ENCODE measurements at regions of chr3 and their contacts with region 1.

Region 1: GRCh38 chr3:129249276-129250065 is at the start of gene COPG1:
- DNase-seq: peak; percentile 89 to 91 (median 90)
- ATAC-seq: peak; percentile 92
- H3K4me3 ChIP-seq: peak within 1 kb of the TSS; percentile 97 to 99
- H3K27ac ChIP-seq: peak within 1 kb of the TSS; percentile 81 to 95 (median 90)
- H3K4me1 ChIP-seq: peaks cover 39% of the 10 kb centered on the region
- H3K27me3 ChIP-seq: no peaks in the 10 kb centered on the region
- CTCF ChIP-seq: peak in 2 of 7 experiments; percentile 0 to 8
- POLR2A ChIP-seq: peak; percentile 88 to 97 (median 97)
- total RNA-seq, gene COPG1: 62.6 to 75.0 TPM

Region 2: DNA sequence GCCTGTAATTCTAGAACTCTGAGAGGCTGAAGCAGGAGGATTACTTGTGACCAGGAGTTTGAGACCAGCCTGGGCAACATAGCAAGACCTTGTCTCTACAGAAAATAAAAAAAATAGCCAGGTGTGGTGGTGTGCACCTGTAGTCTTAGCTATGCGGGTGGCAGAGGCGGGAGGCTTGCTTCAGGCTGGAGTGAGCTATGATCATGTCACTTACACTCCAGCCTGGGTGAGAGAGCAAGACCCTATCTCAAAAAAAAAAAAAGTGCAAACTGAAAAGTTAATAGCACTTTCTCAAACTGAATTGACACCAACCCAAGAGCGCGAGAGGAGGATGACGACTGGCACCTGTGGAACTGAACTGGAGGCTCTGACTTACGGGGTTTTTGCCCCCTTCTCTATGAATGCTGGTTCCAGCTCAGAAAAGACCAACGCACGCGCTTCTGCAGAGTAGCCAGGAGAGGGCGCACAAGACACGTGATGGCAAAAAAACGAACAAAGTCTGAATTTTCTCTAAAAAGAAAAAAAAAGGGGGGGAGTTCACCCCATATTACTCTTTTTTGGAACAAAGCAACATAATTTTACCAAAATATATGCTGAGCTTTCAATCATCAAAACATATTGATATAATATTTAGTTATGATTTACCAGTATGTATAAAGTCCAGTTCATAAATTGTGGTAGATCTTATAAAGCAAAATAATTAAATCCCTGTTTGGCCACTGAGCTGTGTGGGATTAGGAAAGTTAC is 279.3 kb before region 1 on chr3:
- intact Hi-C with region 1: loop called (anchors 5 kb)
- DNase-seq: peak; percentile 37 to 50 (median 41)
- ATAC-seq: peak; percentile 64
- H3K4me3 ChIP-seq: no peak overlapping the region
- H3K27ac ChIP-seq: no peak overlapping the region
- H3K4me1 ChIP-seq: no peaks in the 10 kb centered on the region
- H3K27me3 ChIP-seq: no peaks in the 10 kb centered on the region
- CTCF ChIP-seq: peak; percentile 69 to 93 (median 82)
- POLR2A ChIP-seq: no peak

Region 3: DNA sequence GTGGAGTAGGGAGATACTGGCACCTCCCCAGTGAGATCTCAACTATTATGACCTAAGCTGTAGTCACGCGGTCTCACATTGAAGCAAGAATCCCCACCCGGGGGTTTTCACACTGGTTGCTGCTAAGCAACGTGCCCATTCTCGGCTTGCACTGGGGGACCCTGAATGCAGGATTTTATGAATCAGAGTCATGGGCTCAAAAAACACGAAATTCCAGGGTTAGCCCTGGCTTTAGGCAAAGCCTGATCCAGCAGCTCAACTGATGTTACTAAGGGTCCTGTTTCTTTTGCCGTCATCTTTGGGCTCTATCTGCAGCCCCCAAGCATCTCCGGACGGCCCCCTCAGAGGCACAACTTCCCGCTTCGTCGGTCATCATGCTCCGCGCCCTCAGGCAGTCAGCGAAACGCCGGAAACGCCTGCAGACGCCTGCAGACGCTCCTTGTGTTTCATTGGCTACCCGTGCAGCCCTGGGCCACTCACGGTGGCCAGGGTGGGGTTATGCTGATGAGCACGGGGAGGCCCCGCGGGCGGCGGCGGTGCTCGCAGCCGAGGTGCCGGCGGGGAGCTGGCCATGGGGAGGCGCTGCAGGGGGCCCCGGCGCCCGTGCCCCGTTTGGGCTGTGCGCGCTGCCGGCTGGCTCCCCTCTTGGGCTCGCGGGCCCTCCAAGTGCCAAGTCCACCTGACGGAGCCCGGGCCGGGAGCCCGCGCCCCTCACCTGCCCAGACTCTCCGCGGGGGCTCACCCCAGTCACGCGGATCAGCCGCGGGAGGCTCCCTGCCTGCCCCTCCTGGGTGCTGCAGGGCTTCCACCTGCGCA is 222.5 kb before region 1 on chr3:
- intact Hi-C with region 1: no loop called
- DNase-seq: peak; percentile 89 to 96 (median 94)
- ATAC-seq: peak; percentile 98
- H3K4me3 ChIP-seq: peak overlapping the region in 1 of 2 donors; percentile 42
- H3K27ac ChIP-seq: peak overlapping the region in 2 of 4 donors; percentile 38 to 54
- H3K4me1 ChIP-seq: peaks cover 13% of the 10 kb centered on the region
- H3K27me3 ChIP-seq: no peaks in the 10 kb centered on the region
- CTCF ChIP-seq: peak; percentile 45 to 95 (median 77)
- POLR2A ChIP-seq: peak; percentile 18 to 65 (median 54)

Region 4: DNA sequence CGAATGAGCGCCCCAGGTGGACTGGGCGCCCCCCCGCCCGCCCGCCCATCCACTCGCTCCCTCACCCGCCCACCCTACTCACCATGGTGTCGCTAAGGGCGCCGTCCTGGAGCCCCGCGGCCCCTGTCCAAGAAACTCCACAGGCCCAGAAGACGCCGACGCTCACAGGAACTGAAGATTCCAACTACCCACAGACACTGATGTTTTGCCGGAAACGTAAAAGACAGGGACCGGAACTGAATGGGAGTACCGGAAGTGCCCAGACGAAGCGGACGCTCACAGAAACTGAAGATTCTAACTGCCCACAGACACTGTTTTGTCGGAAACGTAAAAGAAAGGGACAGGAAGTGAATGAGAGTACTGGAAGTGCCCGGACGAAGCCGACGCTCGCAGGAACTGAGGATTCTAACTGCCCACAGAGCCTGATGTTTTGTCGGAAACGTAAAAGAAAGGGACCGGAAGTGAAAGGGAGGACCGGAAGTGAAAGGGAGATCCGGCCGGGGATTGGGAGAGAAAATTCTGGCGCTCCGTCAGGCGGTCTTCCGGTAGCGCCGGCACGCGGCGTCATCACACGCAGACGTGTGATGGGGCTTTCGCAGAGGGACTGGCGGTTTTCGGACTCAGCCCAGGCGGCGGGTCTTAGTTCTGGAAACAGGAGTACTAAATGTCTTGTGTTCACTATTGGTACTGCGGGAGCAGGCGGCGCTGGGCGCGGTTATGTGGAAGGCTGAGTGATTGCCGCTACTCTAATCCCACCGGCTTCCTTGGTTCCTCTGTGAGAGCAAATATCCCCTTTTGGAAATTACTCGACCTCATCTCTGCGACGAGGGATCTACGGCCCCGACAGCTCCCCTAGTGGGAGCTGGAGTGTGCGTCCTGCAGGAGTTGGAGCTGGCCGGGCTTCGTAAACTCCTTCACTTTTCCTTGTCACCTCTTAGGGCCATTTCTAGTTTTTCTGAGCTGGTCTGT is 88.3 kb before region 1 on chr3 and contains the start of gene ISY1:
- intact Hi-C with region 1: loop called (anchors 5 kb)
- DNase-seq: peak; percentile 90 to 94 (median 90)
- ATAC-seq: peak; percentile 95
- H3K4me3 ChIP-seq: peak within 1 kb of the TSS; percentile 74 to 87
- H3K27ac ChIP-seq: peak within 1 kb of the TSS; percentile 89 to 97 (median 92)
- H3K4me1 ChIP-seq: peaks cover 27% of the 10 kb centered on the region
- H3K27me3 ChIP-seq: no peaks in the 10 kb centered on the region
- CTCF ChIP-seq: peak; percentile 36 to 79 (median 68)
- POLR2A ChIP-seq: peak; percentile 59 to 94 (median 93)
- total RNA-seq, gene ISY1: 9.3 to 12.5 TPM

Region 5: GRCh38 chr3:129305592-129306091 is 56.2 kb after region 1 on chr3:
- intact Hi-C with region 1: no loop called
- DNase-seq: peak; percentile 84 to 96 (median 92)
- ATAC-seq: peak; percentile 92
- H3K4me3 ChIP-seq: no peak overlapping the region
- H3K27ac ChIP-seq: peak overlapping the region; percentile 7 to 78 (median 75)
- H3K4me1 ChIP-seq: no peaks in the 10 kb centered on the region
- H3K27me3 ChIP-seq: no peaks in the 10 kb centered on the region
- CTCF ChIP-seq: peak in 1 of 7 experiments; percentile 4
- POLR2A ChIP-seq: peak; percentile 39 to 82 (median 77)

Region 6: GRCh38 chr3:130548356-130548755 is 1298.9 kb after region 1 on chr3:
- intact Hi-C with region 1: no loop called
- DNase-seq: no peak
- ATAC-seq: no peak
- H3K4me3 ChIP-seq: no peak overlapping the region
- H3K27ac ChIP-seq: no peak overlapping the region
- H3K4me1 ChIP-seq: no peaks in the 10 kb centered on the region
- H3K27me3 ChIP-seq: no peaks in the 10 kb centered on the region
- CTCF ChIP-seq: no peak
- POLR2A ChIP-seq: no peak